Calu3 (cell line): ENCODE measurements at regions of chr12 and their contacts with region 1.

Region 1: DNA sequence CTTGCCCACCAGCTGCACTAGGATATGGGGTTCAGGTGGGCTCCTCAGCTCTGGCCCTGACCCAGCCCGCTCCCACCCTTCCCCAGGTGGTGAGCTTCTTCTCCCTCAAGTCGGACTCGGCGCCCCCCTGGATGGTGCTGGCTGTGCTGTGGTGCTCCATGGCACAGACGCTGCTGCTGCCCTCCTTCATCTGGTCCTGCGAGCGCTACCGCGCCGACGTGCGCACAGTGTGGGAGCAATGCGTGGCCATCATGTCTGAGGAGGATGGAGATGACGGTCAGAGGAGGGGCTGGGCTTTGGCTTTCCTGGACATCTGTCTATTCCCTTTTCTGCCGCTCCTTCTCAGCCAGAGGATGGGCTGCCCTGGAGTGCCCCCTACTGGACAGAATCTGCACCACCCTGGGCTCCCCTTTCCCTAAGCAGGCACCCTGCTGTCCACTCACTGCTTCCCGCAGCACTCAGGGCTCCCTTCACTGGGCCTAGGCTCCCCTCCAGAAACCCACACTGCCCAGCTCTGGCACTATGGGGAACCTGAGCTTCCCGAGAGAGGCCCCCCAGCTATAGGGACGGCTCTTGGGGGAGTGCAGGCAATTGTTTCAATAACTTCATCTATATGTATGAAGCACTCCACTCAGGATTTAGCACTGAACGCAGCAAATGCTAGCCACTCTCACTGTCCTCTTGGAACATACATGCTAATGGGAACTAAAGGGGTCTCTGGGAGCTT is 2.6 kb upstream of the P3H3 start:
- DNase-seq: peak; percentile 87
- H3K4me3 Mint-ChIP-seq: no peak overlapping the region
- H3K27ac Mint-ChIP-seq: no peak overlapping the region
- H3K4me1 Mint-ChIP-seq: peaks cover 16% of the 10 kb centered on the region
- H3K27me3 Mint-ChIP-seq: peaks cover 100% of the 10 kb centered on the region
- CTCF ChIP-seq: peak; percentile 80

Region 2: GRCh38 chr12:6554168-6555017 is 271.2 kb before region 1 on chr12:
- CTCF ChIA-PET with region 1: no interaction called
- intact Hi-C with region 1: loop called (anchors 5 kb)
- DNase-seq: peak; percentile 69
- H3K4me3 Mint-ChIP-seq: no peak overlapping the region
- H3K27ac Mint-ChIP-seq: no peak overlapping the region
- H3K4me1 Mint-ChIP-seq: no peaks in the 10 kb centered on the region
- H3K27me3 Mint-ChIP-seq: no peaks in the 10 kb centered on the region
- CTCF ChIP-seq: peak; percentile 39

Region 3: GRCh38 chr12:6613776-6614512 is 211.6 kb before region 1 on chr12:
- CTCF ChIA-PET with region 1: no interaction called
- intact Hi-C with region 1: loop called (anchors 10 kb)
- DNase-seq: peak; percentile 55
- H3K4me3 Mint-ChIP-seq: peak overlapping the region; percentile 16
- H3K27ac Mint-ChIP-seq: peak overlapping the region; percentile 40
- H3K4me1 Mint-ChIP-seq: peaks cover 25% of the 10 kb centered on the region
- H3K27me3 Mint-ChIP-seq: no peaks in the 10 kb centered on the region
- CTCF ChIP-seq: no peak

Region 4: DNA sequence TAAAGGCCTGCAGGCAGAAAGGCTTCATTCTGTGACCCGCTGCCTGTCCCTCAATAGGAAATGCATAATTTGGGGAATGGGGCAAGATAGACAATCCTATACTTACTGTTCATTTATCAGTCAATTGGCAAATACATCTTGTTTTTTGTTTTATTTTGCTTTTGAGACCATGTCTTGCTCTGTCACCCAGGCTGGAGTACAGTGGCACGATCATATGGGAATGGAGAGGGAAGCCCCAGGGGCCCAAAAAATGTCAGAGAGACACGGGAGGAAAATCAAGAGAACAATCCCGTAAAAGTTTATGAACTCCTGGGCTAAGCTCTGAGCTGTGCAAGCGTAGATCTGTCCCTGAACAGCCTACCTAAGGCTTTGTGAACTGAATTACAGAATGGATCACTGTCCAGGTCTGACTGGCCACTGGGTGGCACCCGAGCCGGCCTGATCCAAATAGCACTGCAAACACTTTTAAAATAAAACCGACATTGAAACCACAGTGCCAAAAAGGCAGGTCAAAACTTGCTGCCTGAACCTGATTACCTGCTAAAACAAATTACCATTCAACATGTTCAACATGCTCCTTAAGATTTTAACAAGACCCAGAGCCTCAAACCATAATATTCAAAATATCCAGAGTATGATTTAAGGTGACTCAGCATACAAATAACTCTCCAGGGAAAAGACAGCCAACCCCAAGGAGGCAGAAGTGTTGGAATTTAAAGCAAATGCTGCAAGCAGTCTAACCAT is 89.9 kb before region 1 on chr12:
- CTCF ChIA-PET with region 1: no interaction called
- intact Hi-C with region 1: loop called (anchors 1 kb)
- DNase-seq: peak; percentile 58
- H3K4me3 Mint-ChIP-seq: no peak overlapping the region
- H3K27ac Mint-ChIP-seq: no peak overlapping the region
- H3K4me1 Mint-ChIP-seq: peaks cover 8% of the 10 kb centered on the region
- H3K27me3 Mint-ChIP-seq: no peaks in the 10 kb centered on the region
- CTCF ChIP-seq: no peak